GM10248 (cell line): ENCODE measurements at regions of chr1 and their contacts with region 1.

Region 1: DNA sequence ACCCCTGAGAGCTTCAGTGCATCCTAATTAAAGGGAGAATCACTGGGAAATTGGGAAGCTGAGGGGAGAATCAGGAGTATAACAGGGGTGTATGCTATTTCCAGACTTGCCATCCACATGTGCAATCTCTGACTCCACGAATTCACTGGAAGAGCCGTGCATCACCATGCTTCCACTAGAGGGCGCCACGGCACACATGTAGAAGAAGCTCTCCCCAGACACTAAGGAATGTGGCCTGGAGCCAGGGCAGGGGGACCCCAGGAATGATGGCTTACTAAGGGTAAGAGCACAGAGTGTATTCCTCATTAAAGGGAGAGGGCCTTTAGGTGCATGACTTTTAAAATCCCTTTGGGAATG is 81.5 kb downstream of the ABCA4 start:
- DNase-seq: peak; percentile 59
- CTCF ChIP-seq: peak; percentile 88

Region 2: DNA sequence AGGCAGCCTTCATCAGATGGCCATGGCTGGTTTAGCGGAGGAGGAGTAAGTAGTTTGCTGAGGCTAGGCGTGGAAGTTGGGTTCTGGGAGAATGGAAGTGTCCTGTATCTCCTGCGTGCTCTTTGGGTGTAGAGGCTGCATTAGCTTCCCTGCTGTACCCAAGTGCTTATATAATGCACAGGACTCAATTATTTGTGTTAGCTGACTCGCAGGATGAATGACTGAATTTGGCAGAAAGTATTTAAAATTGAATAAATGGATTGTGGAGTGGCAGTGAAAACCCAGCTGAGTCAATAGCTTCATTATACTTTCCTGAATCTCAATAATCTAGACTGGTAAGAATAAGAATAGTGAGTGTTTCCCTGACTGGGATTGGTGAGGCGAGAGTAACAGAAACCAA is 174.2 kb before region 1 on chr1:
- CTCF ChIA-PET with region 1: no interaction called
- POLR2A ChIA-PET with region 1: no interaction called
- DNase-seq: no peak
- CTCF ChIP-seq: no peak

Region 3: GRCh38 chr1:94068999-94069918 is 29.8 kb after region 1 on chr1:
- CTCF ChIA-PET with region 1: interaction called, 235 read pairs
- POLR2A ChIA-PET with region 1: no interaction called
- DNase-seq: no peak
- CTCF ChIP-seq: no peak

Region 4: DNA sequence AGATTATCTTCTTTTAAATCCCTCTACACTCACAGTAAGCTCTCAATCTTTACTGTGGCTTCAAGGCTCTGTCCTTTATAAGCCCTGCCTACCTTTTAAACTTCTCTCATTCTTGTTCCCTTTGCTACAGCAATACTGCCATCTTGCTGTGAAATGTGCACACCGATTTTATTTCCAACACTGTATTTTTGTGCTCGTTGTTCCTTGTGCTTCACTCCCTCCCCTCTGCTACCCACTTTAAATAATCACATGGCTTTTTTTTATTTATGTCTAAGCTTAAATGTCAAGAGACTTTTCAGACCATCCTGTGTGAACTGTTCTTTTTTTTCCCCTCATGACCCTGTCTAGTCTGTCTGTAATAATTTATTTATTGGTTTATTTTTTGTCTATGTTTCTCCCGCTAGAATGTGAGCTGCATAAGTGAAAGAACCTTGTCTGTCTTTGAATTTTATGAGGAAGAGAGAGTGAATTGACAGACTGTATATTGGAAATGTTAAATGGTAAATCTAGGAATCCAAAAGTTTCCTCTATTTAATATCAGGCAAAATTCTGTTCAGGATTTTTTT is 424.4 kb after region 1 on chr1:
- CTCF ChIA-PET with region 1: interaction called, 26 read pairs
- POLR2A ChIA-PET with region 1: no interaction called
- DNase-seq: peak; percentile 22
- CTCF ChIP-seq: peak; percentile 60